Activated B cell treated with CpG ODN at 0.5 μM for 24 hours (primary cell): ENCODE measurements at regions of chr1 and their contacts with region 1.

Region 1: DNA sequence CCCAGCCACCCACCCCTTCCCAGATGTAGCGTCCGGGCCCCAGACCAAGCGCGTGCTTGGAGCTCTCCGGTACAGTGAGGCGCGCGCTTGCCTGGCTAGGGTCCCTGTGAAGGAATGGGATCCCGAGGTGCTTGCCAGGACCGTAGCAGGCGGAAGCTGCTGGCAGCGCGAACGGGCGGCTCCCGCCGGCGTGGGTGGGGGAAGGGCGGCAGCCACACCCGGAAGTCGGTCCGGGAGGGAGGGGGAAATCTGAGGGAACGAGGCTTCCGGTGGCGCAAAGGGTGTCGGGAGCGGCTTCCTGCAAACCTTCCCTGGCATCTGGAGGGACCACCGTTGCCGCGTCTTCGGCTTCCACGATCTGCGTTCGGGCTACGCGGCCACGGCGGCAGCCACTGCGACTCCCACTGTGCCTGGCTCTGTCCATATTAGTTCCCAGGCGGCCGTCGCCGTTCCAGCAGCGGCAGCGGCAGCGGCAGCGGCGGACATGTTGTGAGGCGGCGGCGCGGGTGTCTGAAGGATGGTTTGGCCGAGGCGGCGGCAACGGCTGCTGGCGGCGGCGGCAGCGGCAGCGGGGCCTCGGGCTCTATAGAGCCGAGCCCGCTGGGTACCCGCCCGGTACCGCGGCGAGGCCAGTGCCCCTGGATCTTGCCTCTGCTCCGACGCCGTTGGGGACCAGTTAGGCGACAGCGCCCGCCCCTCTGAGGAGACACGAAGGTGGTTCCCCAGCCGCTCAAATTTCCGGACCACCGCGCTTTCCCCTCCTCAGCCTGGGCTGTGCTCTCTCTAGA is at the start of gene DR1:
- DNase-seq: peak; percentile 92
- ATAC-seq: peak; percentile 77
- H3K4me3 Mint-ChIP-seq: peak within 1 kb of the TSS; percentile 100
- H3K27ac Mint-ChIP-seq: peak within 1 kb of the TSS; percentile 99
- H3K4me1 Mint-ChIP-seq: peaks cover 49% of the 10 kb centered on the region
- H3K27me3 Mint-ChIP-seq: no peaks in the 10 kb centered on the region
- CTCF ChIP-seq: no peak
- total RNA-seq, gene DR1: 62.3 and 62.9 TPM in 2 replicates

Region 2: GRCh38 chr1:92298573-92299476 is 1047.0 kb before region 1 on chr1 and contains the starts of genes GLMN and RPAP2:
- CTCF ChIA-PET with region 1: no interaction called
- POLR2A ChIA-PET with region 1: no interaction called
- intact Hi-C with region 1: loop called (anchors 5 kb)
- DNase-seq: peak; percentile 82
- ATAC-seq: peak; percentile 96
- H3K4me3 Mint-ChIP-seq: peak within 1 kb of the TSS; percentile 99
- H3K27ac Mint-ChIP-seq: peak within 1 kb of the TSS; percentile 99
- H3K4me1 Mint-ChIP-seq: peaks cover 31% of the 10 kb centered on the region
- H3K27me3 Mint-ChIP-seq: no peaks in the 10 kb centered on the region
- CTCF ChIP-seq: no peak
- total RNA-seq, gene GLMN: 11.1 and 14.7 TPM in 2 replicates
- total RNA-seq, gene RPAP2: 27.1 and 31.7 TPM in 2 replicates

Region 3: DNA sequence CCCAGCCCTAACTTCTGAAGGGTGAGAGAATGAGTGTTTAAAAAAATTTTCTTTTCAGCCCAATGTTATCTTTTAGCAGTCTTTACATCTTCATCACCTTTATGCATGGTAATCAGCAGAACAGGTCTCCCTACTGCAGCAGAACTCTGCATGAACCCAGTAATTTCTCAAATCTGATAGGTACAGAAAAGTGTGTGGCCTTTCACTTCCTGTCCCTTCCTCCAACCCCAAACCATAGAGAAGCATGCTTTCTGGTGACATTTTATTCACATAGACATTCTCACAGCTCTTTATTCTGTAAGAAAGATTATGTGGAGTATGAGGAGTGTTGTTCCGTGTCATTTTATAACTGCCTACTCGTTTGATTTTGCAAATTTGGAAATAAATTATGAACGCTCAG is 978.3 kb before region 1 on chr1:
- CTCF ChIA-PET with region 1: no interaction called
- POLR2A ChIA-PET with region 1: no interaction called
- intact Hi-C with region 1: no loop called
- DNase-seq: no peak
- ATAC-seq: no peak
- H3K4me3 Mint-ChIP-seq: no peak overlapping the region
- H3K27ac Mint-ChIP-seq: peak overlapping the region; percentile 20
- H3K4me1 Mint-ChIP-seq: no peaks in the 10 kb centered on the region
- H3K27me3 Mint-ChIP-seq: no peaks in the 10 kb centered on the region
- CTCF ChIP-seq: no peak

Region 4: GRCh38 chr1:92858564-92859399 is 487.0 kb before region 1 on chr1:
- CTCF ChIA-PET with region 1: no interaction called
- POLR2A ChIA-PET with region 1: no interaction called
- intact Hi-C with region 1: loop called (anchors 10 kb)
- DNase-seq: no peak
- ATAC-seq: peak; percentile 97
- H3K4me3 Mint-ChIP-seq: no peak overlapping the region
- H3K27ac Mint-ChIP-seq: no peak overlapping the region
- H3K4me1 Mint-ChIP-seq: peaks cover 14% of the 10 kb centered on the region
- H3K27me3 Mint-ChIP-seq: no peaks in the 10 kb centered on the region
- CTCF ChIP-seq: peak; percentile 100

Region 5: DNA sequence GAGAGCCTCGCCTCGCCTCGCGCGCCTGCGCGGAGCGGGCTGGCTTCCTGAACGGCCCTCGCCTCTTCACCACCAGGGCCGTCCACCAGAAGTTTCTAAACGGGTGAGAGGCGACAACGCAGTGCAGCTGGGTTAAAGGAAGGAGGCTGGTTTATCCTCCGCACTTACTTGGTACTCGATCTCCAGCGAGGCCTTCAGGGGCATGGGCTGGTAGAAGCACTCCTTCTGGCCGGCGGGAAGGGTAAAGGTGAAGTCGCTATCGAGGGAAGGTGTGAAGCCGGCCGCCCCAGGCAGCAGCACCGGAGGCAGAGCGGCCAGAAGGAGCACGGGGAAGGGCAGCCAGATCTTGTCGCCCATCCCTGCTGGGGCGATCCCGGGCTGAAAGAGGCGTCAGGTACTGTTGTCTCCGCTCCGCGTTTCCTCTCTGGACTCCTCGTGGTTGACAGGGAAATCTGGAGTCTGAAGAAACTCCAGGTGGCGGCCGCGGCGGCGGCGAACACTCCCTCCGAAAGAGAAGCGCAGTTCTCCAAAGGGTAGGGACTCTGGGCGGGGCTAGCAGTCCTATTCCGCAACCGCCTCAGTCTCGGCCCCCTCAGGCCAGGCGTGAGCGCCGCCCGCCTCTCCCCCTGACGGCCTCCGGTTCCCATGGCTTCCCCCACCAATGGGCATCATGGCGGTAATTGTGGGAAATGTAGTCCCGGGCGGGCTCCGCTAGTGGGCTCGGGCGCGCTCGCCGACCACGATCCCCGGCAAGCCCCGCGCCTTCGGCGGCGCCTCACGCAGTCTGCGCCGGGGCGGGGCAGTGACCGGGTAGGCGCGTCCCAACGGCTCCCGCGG is 165.7 kb before region 1 on chr1 and contains the start of gene TMED5:
- CTCF ChIA-PET with region 1: no interaction called
- POLR2A ChIA-PET with region 1: interaction called, 23 read pairs
- intact Hi-C with region 1: loop called (anchors 1 kb)
- DNase-seq: peak; percentile 93
- ATAC-seq: peak; percentile 84
- H3K4me3 Mint-ChIP-seq: peak within 1 kb of the TSS; percentile 94
- H3K27ac Mint-ChIP-seq: peak within 1 kb of the TSS; percentile 96
- H3K4me1 Mint-ChIP-seq: peaks cover 51% of the 10 kb centered on the region
- H3K27me3 Mint-ChIP-seq: no peaks in the 10 kb centered on the region
- CTCF ChIP-seq: no peak
- total RNA-seq, gene TMED5: 38.7 and 42.3 TPM in 2 replicates

Region 6: DNA sequence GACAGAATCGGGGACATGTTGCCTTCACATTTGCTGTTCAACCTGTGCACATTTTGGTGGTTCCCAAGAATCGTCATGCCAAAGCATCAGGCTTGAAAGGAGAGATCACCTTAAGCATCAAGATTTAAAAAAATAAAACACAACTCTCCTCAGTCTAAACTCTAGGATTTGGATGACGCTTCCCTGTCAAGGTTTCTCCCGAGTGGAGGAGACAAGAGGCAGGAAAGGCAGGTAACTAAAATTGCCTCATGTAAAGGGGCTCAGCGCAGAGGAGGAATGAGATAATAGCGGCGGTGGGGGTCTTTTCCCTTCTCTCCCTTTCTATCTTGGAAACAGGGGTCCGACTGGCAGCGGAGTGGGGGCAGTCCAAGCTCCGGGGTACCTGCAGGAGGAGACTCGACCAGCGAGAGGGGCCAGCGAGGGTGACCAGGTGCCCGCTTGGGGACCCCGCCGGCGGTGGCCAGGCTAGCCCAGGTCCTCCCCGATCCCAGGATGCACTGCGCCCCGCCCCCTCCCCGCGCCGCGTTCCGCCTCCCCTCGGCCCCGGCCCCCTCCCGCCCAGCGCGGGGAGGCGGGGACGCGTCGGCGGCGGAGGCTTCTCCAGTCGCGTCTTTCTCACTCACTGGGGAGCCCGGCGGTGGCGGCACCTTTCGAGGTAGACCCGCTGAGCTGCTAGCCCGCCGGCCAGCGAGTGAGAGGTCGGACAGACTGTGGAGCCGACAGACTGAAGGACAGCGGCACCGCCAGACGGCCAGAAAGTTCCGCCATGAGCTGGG is 101.9 kb after region 1 on chr1 and contains the start of gene FNBP1L:
- CTCF ChIA-PET with region 1: no interaction called
- POLR2A ChIA-PET with region 1: interaction called, 15 read pairs
- intact Hi-C with region 1: loop called (anchors 1 kb)
- DNase-seq: peak; percentile 66
- ATAC-seq: peak; percentile 86
- H3K4me3 Mint-ChIP-seq: peak within 1 kb of the TSS; percentile 96
- H3K27ac Mint-ChIP-seq: no peak within 1 kb of the TSS
- H3K4me1 Mint-ChIP-seq: peaks cover 25% of the 10 kb centered on the region
- H3K27me3 Mint-ChIP-seq: peaks cover 23% of the 10 kb centered on the region
- CTCF ChIP-seq: no peak
- total RNA-seq, gene FNBP1L: 3.3 and 3.4 TPM in 2 replicates

Region 7: GRCh38 chr1:93878889-93879586 is 533.2 kb after region 1 on chr1 and contains the start of gene DNTTIP2:
- CTCF ChIA-PET with region 1: no interaction called
- POLR2A ChIA-PET with region 1: interaction called, 21 read pairs
- intact Hi-C with region 1: loop called (anchors 1 kb)
- DNase-seq: peak; percentile 77
- ATAC-seq: peak; percentile 91
- H3K4me3 Mint-ChIP-seq: peak within 1 kb of the TSS; percentile 96
- H3K27ac Mint-ChIP-seq: peak within 1 kb of the TSS; percentile 97
- H3K4me1 Mint-ChIP-seq: peaks cover 48% of the 10 kb centered on the region
- H3K27me3 Mint-ChIP-seq: no peaks in the 10 kb centered on the region
- CTCF ChIP-seq: no peak
- total RNA-seq, gene DNTTIP2: 65.6 and 69.7 TPM in 2 replicates